Colonic mucosa (tissue), 4 donors: ENCODE measurements at regions of chr7 and their contacts with region 1.

Region 1: GRCh38 chr7:90455163-90456030 is 14.0 kb upstream of the PTTG1IP2 start:
- DNase-seq: peak; percentile 33
- H3K4me3 ChIP-seq: no peak overlapping the region
- H3K27ac ChIP-seq: no peak overlapping the region
- H3K4me1 ChIP-seq: no peaks in the 10 kb centered on the region
- H3K27me3 ChIP-seq: no peaks in the 10 kb centered on the region
- CTCF ChIP-seq: peak; percentile 64

Region 2: DNA sequence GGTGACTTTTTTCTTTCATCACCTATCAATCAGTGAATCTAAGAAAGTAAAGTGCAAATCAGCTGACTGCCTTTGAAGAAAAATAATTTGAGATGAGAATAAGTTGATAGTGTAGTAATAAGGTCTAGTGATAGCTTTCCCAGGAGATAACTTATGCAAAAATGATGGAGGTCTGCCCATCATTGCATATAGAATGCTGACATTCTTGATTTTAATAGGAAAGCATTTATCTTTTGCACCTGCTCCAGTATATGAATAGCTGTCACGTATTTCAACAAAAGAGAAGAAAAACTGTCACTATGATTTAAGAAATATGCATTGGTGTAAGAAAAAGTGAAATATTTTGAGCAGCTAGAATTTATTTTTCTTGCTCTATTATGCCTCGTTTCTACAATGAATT is 60.9 kb after region 1 on chr7:
- intact Hi-C with region 1: loop called (anchors 5 kb)
- DNase-seq: no peak
- H3K4me3 ChIP-seq: no peak overlapping the region
- H3K27ac ChIP-seq: no peak overlapping the region
- H3K4me1 ChIP-seq: no peaks in the 10 kb centered on the region
- H3K27me3 ChIP-seq: no peaks in the 10 kb centered on the region
- CTCF ChIP-seq: no peak

Region 3: DNA sequence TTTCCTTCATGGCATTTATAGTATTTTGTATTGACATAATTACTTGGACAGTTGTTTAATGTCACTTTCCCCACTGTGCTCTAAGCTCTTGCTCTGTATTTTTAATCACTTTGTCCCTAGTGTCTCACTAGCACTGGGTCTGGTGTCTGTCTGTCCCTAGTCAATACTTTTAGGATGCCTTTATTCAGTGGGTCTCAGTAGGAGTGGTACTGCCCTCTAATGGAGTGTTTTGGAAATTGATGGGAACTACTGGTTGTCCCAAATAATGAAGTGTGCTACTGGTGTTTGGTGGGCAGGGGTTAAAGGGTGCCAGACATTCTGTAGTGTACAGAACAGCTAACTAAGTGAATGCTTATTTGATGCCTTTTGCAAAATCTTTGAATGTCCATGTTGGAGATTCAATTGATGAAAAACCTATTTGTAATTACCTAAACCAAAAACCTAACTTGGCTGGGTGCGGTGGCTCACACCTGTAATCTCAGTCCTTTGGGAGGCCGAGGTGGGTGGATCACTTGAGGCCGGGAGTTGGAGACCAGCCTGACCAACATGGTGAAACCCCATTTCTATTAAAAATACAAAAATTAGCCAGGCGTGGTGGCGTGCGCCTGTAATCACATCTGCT is 174.0 kb after region 1 on chr7:
- intact Hi-C with region 1: loop called (anchors 5 kb)
- DNase-seq: peak; percentile 22
- H3K4me3 ChIP-seq: no peak overlapping the region
- H3K27ac ChIP-seq: no peak overlapping the region
- H3K4me1 ChIP-seq: no peaks in the 10 kb centered on the region
- H3K27me3 ChIP-seq: no peaks in the 10 kb centered on the region
- CTCF ChIP-seq: peak; percentile 46

Region 4: GRCh38 chr7:90690159-90690858 is 234.9 kb after region 1 on chr7:
- intact Hi-C with region 1: loop called (anchors 10 kb)
- DNase-seq: no peak
- H3K4me3 ChIP-seq: no peak overlapping the region
- H3K27ac ChIP-seq: no peak overlapping the region
- H3K4me1 ChIP-seq: no peaks in the 10 kb centered on the region
- H3K27me3 ChIP-seq: no peaks in the 10 kb centered on the region
- CTCF ChIP-seq: no peak

Region 5: DNA sequence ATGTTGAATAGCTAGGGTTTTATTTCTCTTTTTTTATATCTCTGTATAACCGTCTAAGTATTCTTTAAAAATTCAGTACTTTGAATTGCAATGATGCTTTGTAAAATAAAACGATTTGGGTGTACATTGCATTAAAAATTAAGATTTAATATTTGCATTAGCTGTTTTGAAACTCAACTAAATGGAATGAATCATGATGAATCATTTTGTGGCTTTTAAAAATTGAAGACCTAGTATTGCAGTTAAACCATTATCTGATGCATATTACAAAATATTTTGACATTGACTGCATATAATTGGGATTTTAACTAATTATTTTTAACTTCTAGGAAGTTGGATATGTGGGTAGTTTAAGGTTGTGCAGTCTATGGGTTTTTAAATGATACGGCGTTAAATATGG is 454.7 kb after region 1 on chr7:
- intact Hi-C with region 1: no loop called
- DNase-seq: no peak
- H3K4me3 ChIP-seq: no peak overlapping the region
- H3K27ac ChIP-seq: no peak overlapping the region
- H3K4me1 ChIP-seq: no peaks in the 10 kb centered on the region
- H3K27me3 ChIP-seq: no peaks in the 10 kb centered on the region
- CTCF ChIP-seq: no peak

Region 6: GRCh38 chr7:91034459-91035368 is 579.3 kb after region 1 on chr7:
- intact Hi-C with region 1: loop called (anchors 5 kb)
- DNase-seq: peak; percentile 62
- H3K4me3 ChIP-seq: no peak overlapping the region
- H3K27ac ChIP-seq: no peak overlapping the region
- H3K4me1 ChIP-seq: no peaks in the 10 kb centered on the region
- H3K27me3 ChIP-seq: no peaks in the 10 kb centered on the region
- CTCF ChIP-seq: peak; percentile 46